ENCODE measurements at regions of chr14 and their contacts with region 1.

Region 1: DNA sequence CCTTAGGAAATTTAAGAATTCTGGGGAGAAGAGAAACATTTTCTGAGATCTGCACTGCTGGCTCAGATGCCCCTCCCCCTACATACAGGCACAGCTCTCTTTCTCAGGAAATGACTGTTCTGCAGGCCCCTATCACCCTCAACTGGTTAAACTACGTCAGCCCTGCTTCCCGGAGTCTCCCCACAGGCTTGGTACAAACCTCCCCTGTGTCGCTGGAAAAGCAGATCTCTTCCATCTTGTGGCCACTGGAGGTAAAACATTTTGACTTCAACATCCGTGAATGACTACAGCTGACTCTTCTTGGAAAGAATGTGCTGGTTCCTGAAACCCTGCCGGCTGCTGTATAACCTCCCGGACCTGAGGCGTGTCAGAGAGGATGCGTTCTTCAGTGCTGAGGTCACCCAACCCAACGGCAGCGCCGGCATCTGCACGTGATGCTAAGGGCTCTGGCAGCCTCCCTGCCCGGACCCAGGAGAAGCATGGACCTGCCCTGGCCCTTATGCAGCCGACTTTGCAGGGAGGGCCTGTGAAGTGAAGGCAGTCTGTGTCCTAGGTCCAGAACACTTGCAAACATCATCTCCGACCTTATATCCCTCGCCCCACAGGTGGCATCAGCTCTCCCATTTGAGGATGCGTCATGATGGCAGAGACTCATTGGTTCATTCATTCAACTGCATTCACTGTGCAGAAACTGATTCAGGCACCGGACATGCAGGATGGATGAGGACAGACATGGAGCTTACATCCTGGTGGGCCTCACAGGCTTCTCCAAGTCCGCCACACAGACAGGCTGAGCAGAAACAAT is 129.3 kb downstream of the GCH1 start:
- DNase-seq: peak; percentile 74
- CTCF ChIP-seq: peak; percentile 41

Region 2: DNA sequence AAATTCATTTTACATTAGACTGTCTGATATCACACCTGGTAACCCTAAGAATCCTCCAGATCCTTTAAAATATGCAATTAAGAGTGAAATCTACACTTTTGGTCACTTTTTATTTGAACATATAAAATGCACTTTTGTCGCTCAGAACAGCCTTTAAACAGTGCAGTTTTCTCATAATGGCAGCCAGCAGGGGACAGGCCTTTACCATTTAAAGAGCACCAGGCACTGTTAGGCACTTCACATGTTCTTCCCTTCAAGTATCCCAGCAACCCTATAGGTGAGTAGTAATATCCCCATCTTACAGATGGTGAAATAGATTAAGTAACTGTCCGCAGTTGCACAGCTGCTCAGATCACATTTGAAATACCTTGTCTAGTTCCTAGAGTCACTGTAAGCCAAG is 217.7 kb before region 1 on chr14:
- CTCF ChIA-PET with region 1: interaction called, 15 read pairs
- POLR2A ChIA-PET with region 1: no interaction called
- DNase-seq: no peak
- CTCF ChIP-seq: no peak

Region 3: GRCh38 chr14:54652188-54652587 is 121.2 kb before region 1 on chr14:
- CTCF ChIA-PET with region 1: interaction called, 10 read pairs
- POLR2A ChIA-PET with region 1: no interaction called
- DNase-seq: no peak
- CTCF ChIP-seq: no peak

Region 4: DNA sequence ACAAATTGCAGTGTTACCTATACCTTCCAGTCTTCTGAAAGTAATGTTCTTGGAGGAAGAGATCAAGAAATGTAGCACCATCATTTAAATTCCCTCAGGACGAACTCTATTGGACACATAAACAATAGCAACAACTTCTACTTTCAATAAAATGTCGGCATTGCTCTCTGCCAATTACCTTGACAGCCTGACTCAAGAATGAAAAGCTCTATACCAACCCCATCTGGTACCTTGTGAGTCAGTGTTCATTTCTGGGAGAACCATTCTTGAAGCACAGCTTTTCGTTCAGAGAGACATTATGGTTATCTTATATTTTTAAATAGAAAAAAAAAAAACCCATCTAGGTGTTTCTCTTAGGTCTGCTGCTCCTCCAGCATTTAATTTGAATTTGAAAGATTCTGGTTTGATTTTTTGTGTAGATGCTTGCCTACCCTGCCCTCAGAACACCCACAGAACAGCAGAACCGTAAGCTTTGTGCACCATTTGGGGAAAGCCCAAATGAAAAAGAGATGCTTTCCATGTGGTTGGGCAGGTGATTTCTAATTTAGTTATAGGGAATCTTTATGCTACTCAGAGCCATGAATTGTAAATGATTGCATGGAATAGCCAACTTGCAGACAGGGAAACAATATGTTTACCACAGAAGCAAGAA is 50.5 kb before region 1 on chr14:
- CTCF ChIA-PET with region 1: interaction called, 34 read pairs
- POLR2A ChIA-PET with region 1: no interaction called
- DNase-seq: peak; percentile 29
- CTCF ChIP-seq: peak; percentile 69

Region 5: GRCh38 chr14:54754623-54755386 is 18.6 kb before region 1 on chr14:
- CTCF ChIA-PET with region 1: interaction called, 25 read pairs
- POLR2A ChIA-PET with region 1: no interaction called
- DNase-seq: no peak
- CTCF ChIP-seq: no peak

Region 6: DNA sequence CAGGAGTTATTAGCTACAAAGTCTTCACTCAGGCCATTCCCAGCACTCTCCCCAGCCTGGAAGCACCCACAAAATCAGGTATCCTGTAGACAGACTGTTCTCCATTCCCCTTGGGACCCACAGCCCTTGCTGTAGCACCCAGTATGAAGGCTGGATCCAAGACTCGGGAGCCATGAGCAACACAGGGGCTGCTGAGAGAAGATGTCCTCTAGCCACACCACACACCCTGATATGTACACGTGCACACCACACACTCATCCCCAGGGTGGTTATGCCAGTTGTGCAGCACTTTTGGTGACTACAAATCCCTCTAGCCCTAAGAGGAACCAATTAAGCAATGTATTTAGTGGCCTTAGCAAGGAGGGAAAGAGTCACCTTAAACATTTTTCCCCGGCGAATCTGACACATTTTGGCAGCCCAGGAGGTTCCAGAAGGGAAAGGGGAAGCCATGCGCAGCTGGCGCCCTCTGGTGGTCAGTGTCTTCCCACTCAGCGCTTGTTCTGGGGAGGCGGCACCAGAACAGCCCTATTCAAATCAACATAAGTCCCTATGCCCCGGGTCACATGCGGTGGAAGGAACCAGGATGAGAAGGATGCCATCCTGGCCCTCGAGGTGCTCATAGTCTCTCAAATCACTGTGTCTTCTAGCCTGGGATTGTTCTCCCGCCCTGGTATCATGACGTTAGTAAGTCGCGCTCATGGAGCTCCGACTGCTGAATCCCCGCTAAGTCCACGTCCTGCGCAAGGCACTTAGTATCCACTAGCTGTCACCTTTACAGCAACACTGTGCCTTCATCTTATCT is 32.3 kb after region 1 on chr14:
- CTCF ChIA-PET with region 1: interaction called, 77 read pairs
- POLR2A ChIA-PET with region 1: no interaction called
- DNase-seq: peak; percentile 82
- CTCF ChIP-seq: peak; percentile 91

Measured in GM10248 (cell line).